ENCODE measurements at regions of chr7 and their contacts with region 1.

Region 1: DNA sequence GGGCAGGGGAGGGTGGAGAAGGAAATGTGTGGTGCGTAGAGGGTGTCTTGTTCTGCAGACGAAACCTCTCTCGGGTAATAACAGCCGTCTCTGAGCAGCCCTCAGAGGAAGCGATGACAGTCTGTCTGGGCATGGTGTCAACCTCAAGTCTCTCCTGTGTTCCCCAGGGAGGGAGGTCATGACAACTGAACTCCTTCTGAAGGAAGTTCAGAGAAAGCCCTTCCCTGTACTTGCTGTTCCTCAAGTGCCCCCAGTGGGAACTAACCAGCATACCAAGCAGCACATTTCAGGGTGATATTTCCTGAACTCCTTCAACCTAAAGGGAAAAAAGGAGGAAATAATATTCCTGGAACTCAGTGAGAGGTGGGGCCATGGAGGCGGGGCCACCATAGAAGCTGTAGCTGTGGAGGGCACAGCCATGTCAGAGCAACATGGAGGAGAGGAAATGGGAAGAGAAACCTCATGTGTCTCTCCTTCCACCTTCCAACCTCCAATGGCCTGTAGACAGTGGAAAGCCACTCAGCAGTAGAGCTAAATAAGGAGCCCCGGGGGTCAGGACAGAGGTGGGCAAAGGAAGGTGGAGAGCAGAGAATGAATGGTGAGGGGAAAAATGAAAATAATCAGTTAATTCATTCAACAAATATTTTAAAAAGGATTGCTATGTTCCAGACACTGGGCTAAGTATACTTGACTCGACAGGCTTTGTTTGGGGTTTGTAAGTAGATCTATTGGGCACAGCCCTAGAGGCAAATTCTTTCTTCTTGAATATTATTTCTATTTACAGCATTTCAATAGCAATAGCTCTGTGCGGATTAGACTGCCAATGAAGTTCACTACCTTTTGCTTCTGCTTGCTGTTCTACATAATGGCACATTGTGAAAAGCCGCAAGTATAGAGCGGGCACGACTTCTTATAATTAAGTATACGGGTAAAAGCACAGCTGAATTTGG is 61.0 kb upstream of the AOAH start:
- DNase-seq: peak; percentile 68
- H3K4me3 Mint-ChIP-seq: no peak overlapping the region
- H3K27ac Mint-ChIP-seq: peak overlapping the region; percentile 2
- H3K4me1 Mint-ChIP-seq: peaks cover 71% of the 10 kb centered on the region
- H3K27me3 Mint-ChIP-seq: no peaks in the 10 kb centered on the region

Region 2: DNA sequence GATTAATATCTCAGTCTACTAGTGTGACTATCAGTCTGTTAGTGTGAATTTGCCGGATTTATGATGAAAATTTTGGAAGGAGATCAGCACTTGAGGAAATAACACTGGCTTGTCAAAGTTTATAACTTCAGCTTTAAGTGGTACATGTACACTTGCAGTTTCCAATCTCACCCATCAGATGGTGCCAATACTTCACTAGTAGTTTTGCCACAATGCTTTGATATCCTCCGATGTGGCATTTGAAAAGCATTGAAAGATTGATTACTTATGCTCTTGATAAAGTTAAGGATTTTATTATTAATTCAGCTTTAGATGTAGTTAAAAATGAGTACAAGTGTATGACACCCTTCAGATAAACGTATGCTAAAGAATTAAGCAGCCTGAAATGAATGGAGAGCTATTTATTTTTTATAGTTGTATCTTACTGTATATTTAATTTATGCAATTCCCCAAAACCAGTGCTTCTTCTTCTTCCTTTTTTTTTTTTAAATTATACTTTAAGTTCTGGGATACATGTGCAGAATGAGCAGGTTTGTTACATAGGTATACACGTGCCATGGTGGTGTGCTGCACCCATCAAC is 297.4 kb before region 1 on chr7:
- CTCF ChIA-PET with region 1: no interaction called
- intact Hi-C with region 1: loop called (anchors 5 kb)
- DNase-seq: peak; percentile 54
- H3K4me3 Mint-ChIP-seq: no peak overlapping the region
- H3K27ac Mint-ChIP-seq: no peak overlapping the region
- H3K4me1 Mint-ChIP-seq: peaks cover 2% of the 10 kb centered on the region
- H3K27me3 Mint-ChIP-seq: no peaks in the 10 kb centered on the region

Region 3: GRCh38 chr7:36723951-36724664 is 61.2 kb before region 1 on chr7 and contains the start of gene AOAH:
- CTCF ChIA-PET with region 1: interaction called, 3 read pairs
- intact Hi-C with region 1: loop called (anchors 1 kb)
- DNase-seq: peak; percentile 88
- H3K4me3 Mint-ChIP-seq: peak within 1 kb of the TSS; percentile 63
- H3K27ac Mint-ChIP-seq: peak within 1 kb of the TSS; percentile 84
- H3K4me1 Mint-ChIP-seq: peaks cover 70% of the 10 kb centered on the region
- H3K27me3 Mint-ChIP-seq: no peaks in the 10 kb centered on the region
- total RNA-seq, gene AOAH: 0.67 to 1.2 TPM

Region 4: DNA sequence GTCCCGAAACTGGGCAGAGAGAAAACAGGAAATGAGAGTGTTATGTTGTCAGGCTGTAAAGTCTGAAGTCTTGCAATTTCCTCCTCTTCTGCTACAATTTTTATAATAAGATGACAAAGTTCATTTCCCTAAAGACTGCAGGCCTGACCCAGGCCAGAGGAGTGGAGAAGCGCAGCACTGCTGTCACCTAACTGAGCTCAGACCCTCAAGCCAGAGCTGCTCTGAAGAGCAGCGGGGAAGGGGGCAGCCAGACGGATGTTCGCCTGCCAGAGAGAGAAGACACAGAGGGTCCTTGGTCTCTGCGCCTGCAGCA is 48.4 kb before region 1 on chr7:
- CTCF ChIA-PET with region 1: no interaction called
- intact Hi-C with region 1: no loop called
- DNase-seq: no peak
- H3K4me3 Mint-ChIP-seq: no peak overlapping the region
- H3K27ac Mint-ChIP-seq: no peak overlapping the region
- H3K4me1 Mint-ChIP-seq: peaks cover 27% of the 10 kb centered on the region
- H3K27me3 Mint-ChIP-seq: no peaks in the 10 kb centered on the region

Region 5: GRCh38 chr7:37031571-37032257 is 246.4 kb after region 1 on chr7:
- CTCF ChIA-PET with region 1: no interaction called
- intact Hi-C with region 1: loop called (anchors 5 kb)
- DNase-seq: peak; percentile 79
- H3K4me3 Mint-ChIP-seq: no peak overlapping the region
- H3K27ac Mint-ChIP-seq: peak overlapping the region; percentile 50
- H3K4me1 Mint-ChIP-seq: peaks cover 60% of the 10 kb centered on the region
- H3K27me3 Mint-ChIP-seq: no peaks in the 10 kb centered on the region

Region 6: GRCh38 chr7:37045681-37046179 is 260.5 kb after region 1 on chr7:
- CTCF ChIA-PET with region 1: no interaction called
- intact Hi-C with region 1: no loop called
- DNase-seq: no peak
- H3K4me3 Mint-ChIP-seq: no peak overlapping the region
- H3K27ac Mint-ChIP-seq: no peak overlapping the region
- H3K4me1 Mint-ChIP-seq: peaks cover 10% of the 10 kb centered on the region
- H3K27me3 Mint-ChIP-seq: no peaks in the 10 kb centered on the region

Measured in activated naive CD4-positive, alpha-beta T cell treated with anti-CD3 and anti-CD28 coated beads for 36 hours (primary cell).